ENCODE measurements at regions of chr16 and their contacts with region 1.

Region 1: DNA sequence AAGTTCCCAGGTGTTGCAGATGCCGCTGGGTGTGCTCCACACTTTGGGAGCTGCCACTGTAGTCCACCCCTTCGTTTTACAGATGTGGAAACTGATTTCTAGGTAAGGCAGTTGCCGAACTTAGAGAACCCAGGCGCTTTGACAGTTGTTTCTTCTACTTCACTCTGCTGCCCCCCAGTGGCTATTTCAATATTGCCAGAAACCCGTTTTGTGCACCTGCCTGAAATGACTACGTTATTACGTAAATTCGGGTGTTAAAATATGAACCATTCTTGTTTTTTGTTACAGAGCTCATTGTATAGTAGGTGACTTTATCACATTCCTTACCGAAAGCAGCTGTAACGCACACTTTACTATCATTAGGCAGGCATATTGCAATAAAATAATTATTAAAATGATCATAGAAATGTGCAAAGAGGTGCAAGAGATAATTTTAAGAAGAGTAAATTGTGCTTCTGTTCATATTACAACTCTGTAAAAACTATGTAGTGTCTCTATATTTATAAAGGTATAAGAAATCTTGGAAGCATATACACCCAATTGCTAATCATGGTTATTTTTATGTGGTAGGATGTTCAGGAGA is 44.9 kb downstream of the OTOA start:
- DNase-seq: peak; percentile 91
- H3K4me3 ChIP-seq: no peak overlapping the region
- H3K27ac ChIP-seq: no peak overlapping the region
- H3K4me1 ChIP-seq: no peaks in the 10 kb centered on the region
- H3K27me3 ChIP-seq: no peaks in the 10 kb centered on the region
- CTCF ChIP-seq: peak; percentile 69

Region 2: GRCh38 chr16:21584817-21585216 is 123.8 kb before region 1 on chr16:
- intact Hi-C with region 1: loop called (anchors 2 kb)
- DNase-seq: no peak
- H3K4me3 ChIP-seq: no peak overlapping the region
- H3K27ac ChIP-seq: no peak overlapping the region
- H3K4me1 ChIP-seq: no peaks in the 10 kb centered on the region
- H3K27me3 ChIP-seq: no peaks in the 10 kb centered on the region
- CTCF ChIP-seq: no peak

Region 3: DNA sequence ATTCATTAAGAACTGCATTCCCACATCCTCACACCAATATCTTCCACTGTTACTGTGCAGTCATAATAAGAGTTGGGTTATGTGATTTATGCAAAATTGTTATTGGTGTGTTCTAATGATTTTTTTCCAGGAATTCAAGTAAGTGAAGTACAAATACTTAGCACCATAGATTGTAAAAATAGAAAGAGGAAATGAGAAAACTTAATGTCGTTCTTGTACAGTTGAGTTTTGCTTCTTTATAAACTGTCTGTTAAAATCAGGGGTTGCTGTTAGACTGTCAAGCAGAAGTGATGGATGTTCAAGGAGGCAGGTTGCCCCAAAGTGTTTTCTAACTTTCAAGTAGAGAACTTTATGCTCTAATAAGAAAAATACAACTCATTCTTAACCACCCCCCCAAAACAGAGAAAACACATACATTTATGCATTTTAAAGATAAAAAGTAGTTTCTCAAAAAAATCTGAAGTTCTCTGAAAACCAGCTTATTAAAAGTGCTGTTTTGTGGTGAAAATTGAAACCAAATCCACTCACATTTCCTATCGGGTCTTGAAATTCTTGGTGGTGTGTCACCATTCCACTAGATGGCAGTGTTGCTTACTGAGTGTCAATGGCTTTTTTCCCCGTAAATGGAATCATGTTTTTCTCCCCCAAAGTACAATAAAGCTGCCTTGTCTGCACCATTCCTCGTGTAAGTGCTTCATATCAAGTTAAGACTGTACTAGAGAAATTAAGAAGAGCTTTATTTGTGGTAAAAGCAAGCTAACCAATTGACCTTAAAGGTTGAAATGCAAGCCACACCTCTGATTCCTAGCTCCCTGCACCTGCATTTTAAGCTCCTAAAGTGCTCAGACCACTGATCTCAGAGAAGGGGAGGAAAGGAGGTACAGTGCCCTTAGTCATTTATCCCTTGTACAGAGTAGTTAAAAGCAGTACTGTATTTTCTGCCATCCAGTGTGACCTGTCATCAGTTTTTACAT is 51.5 kb before region 1 on chr16:
- intact Hi-C with region 1: loop called (anchors 2 kb)
- DNase-seq: peak; percentile 38
- H3K4me3 ChIP-seq: no peak overlapping the region
- H3K27ac ChIP-seq: peak overlapping the region; percentile 24
- H3K4me1 ChIP-seq: peaks cover 11% of the 10 kb centered on the region
- H3K27me3 ChIP-seq: no peaks in the 10 kb centered on the region
- CTCF ChIP-seq: peak; percentile 79